ENCODE measurements at regions of chr18 and their contacts with region 1.

Region 1: DNA sequence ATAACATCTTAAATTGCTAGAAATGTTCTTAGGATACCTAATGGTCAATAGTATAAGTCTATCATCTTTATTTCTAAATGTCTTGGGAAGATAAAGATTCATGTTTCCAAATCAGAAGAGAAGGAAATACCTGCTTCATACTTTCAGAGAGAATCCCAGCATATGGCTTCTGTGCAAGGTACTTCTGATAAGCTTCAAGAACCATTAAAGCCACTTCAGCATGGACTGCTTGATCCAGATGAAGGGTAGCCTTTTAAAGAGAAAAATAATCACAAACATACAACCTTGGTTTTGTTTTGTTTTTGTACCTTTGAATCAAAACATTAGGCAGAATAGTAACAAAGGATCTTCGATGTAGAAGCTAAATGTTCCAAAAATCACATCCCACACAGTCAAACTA is 44.0 kb downstream of the EPG5 start:
- DNase-seq: no peak
- H3K4me3 ChIP-seq: no peak overlapping the region
- H3K27ac ChIP-seq: no peak overlapping the region
- H3K27me3 ChIP-seq: no peaks in the 10 kb centered on the region
- CTCF ChIP-seq: no peak

Region 2: DNA sequence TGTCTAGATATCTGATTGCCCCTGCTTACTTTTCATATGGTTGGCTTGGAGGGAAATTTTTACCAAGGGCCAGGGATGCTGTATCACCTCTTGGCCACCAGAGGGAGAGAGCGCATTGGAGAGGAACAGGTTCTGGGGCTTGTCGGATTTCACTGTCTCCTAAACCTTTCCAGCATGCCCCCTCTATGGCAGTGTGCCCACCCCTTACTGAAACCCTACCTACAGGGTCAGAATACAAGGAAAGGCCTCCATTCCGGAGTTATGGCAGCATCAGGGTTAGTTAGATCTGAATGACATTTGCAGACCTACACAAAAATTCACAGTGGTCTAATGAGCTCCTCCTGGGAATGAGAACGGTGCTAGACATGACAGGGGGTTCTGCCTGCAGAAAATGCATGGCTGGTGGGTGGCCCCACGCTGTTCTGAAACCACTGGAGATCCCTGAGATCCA is 302.1 kb before region 1 on chr18:
- CTCF ChIA-PET with region 1: no interaction called
- POLR2A ChIA-PET with region 1: no interaction called
- DNase-seq: no peak
- H3K4me3 ChIP-seq: no peak overlapping the region
- H3K27ac ChIP-seq: no peak overlapping the region
- H3K27me3 ChIP-seq: peaks cover 13% of the 10 kb centered on the region
- CTCF ChIP-seq: peak; percentile 99

Region 3: GRCh38 chr18:45974088-45974536 is 51.0 kb after region 1 on chr18:
- CTCF ChIA-PET with region 1: interaction called, 14 read pairs
- POLR2A ChIA-PET with region 1: no interaction called
- DNase-seq: peak; percentile 65
- H3K4me3 ChIP-seq: no peak overlapping the region
- H3K27ac ChIP-seq: no peak overlapping the region
- H3K27me3 ChIP-seq: no peaks in the 10 kb centered on the region
- CTCF ChIP-seq: peak; percentile 81